SK-MEL-5 (cell line): ENCODE measurements at regions of chr2 and their contacts with region 1.

Region 1: DNA sequence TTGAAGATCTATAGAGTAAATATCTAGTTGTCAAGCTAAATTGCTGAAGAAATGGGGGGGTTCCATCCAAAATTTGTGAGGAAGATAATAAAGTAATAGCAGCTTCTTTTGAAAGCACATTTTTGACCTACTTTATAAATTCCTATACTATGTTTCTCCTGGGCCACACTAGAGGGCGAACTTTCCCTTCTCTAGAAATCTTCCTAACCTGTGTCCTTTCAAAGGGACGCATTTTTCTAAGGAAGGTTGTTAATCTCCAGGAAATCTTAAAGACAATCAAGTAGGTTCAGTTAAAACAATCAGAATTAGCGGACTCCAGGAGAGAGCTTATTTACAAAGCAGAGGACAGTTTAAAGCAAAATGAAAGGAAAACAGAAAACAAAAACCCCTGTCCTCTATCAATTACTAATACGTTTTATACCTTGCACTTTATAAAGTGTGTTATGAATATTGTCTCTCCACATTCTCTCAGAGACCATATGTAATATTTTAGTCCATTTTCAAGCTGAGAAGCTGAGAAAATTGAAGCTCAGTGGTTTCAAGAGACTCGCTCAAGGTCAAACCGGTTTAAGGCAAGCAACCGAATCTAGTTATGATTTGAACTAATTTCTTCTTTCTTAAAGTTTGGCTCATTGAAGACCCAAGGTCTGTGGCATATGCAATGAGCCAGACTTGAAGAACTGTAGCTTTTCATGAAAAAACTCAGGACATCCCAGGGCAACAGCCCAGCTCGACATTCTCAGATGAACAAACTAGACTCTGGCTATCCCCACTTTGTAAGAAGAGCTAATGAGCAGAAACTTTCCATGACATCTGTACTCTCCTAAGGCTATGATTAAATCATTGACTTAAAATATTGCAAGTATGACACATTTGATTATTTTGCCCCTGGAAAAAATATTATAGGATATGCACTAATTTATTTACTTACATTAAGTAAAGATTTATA is 273.6 kb downstream of the PAX3 start:
- DNase-seq: peak; percentile 65

Region 2: GRCh38 chr2:222336439-222336838 is 311.2 kb after region 1 on chr2:
- in situ Hi-C with region 1: no loop called
- DNase-seq: no peak

Region 3: GRCh38 chr2:222448748-222449181 is 423.6 kb after region 1 on chr2:
- in situ Hi-C with region 1: no loop called
- DNase-seq: no peak

Region 4: DNA sequence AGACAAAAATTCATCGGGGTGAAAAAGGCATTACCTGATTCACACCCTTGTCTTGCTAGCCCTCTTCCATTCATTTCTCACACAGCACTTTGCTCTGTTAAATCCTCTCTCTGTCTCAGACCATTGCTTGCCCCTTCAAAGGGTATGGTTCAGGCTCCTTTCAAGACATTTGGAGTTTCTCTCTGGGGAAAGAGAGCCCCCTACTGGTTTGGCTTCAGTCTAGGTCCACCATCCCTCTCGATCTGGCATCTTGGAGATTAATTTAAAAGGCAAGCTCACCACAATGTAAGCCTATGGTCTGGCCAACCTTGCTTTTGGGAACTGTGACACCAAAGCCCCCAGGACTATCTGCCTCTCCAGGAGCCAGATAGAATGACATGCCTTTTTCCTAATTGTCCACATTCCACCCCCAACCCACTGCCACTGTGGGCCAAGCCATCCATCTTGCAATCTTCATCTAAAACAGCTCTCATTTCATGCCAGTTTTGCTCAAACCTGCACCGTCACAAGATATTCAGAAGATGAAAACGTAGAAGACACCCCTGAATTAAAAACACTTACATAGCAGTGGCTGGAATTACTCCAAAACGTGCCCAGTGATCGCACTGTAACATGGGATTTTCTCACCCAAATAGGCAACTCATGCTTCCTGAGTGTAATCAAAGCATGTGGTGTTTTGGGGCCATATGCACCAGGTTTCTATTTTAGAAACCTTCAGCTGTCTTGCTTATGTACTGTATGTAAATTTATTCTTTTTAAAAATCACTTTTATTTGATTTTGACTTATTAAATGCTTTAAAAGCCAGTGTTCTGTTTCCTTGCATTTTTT is 536.8 kb after region 1 on chr2:
- in situ Hi-C with region 1: loop called (anchors 25 kb)
- DNase-seq: peak; percentile 85